Ascending aorta (tissue), 2 donors: ENCODE measurements at regions of chr1 and their contacts with region 1.

Region 1: GRCh38 chr1:33472349-33472980 is at the start of gene ZSCAN20:
- DNase-seq: peak; percentile 94 to 99
- H3K4me3 ChIP-seq: peak within 1 kb of the TSS; percentile 68 to 73
- H3K27ac ChIP-seq: peak within 1 kb of the TSS; percentile 89 to 90
- H3K4me1 ChIP-seq: peaks cover 3 to 27% of the 10 kb centered on the region in 2 donors
- H3K27me3 ChIP-seq: no peaks in the 10 kb centered on the region
- CTCF ChIP-seq: no peak
- total RNA-seq, gene ZSCAN20: 42.6 TPM

Region 2: GRCh38 chr1:33127001-33127791 is 345.3 kb before region 1 on chr1:
- intact Hi-C with region 1: loop called (anchors 1 kb)
- DNase-seq: peak; percentile 97 to 100
- H3K4me3 ChIP-seq: peak overlapping the region; percentile 63 to 79
- H3K27ac ChIP-seq: peak overlapping the region; percentile 86 to 88
- H3K4me1 ChIP-seq: peaks cover 7 to 15% of the 10 kb centered on the region in 2 donors
- H3K27me3 ChIP-seq: no peaks in the 10 kb centered on the region
- CTCF ChIP-seq: peak; percentile 85 to 89 (median 87)

Region 3: DNA sequence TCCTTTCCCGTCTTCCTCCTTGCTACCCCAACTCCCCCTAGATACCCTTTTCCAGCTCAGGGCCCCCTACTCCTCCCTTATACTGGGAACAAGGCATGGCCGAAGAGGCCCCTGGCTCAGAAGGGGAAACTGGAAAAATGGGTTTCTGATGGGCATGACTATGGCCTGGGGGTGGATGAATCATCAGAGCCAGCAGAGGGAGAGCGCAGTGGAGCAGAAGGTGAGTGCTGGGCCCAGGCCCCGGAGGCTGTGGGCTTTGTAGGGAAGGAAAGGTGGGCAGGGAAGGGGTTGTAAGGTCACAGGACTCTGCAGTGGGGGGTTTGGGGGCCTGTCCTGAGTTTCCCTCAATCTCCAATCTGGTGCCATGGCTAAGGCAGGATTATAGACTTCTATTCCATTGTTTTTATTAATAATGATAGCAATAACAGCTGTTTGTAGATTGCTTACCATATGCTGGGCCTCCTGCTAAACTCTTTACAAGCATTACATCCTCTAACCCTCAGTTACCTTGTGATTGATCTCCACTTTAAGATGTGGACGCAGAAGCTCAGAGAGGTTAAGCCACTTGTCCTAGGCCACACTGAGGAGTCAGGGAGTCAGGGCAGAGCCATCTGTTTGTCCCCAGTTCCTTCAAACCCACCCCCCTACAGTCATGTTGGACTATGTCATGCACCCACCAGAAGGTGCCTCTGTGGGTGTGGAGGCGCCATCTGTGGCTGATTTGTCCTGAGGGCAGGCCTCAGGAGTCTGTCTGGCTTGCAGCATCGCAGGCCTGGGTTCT is 252.4 kb before region 1 on chr1:
- intact Hi-C with region 1: loop called (anchors 2 kb)
- DNase-seq: no peak
- H3K4me3 ChIP-seq: no peak overlapping the region
- H3K27ac ChIP-seq: no peak overlapping the region
- H3K4me1 ChIP-seq: peaks cover 0 to 2% of the 10 kb centered on the region in 2 donors
- H3K27me3 ChIP-seq: no peaks in the 10 kb centered on the region
- CTCF ChIP-seq: no peak

Region 4: GRCh38 chr1:33295450-33296081 is 176.9 kb before region 1 on chr1:
- intact Hi-C with region 1: loop called (anchors 1 kb)
- DNase-seq: peak; percentile 43 to 93
- H3K4me3 ChIP-seq: no peak overlapping the region
- H3K27ac ChIP-seq: peak overlapping the region; percentile 44 to 54
- H3K4me1 ChIP-seq: peaks cover 4 to 13% of the 10 kb centered on the region in 2 donors
- H3K27me3 ChIP-seq: no peaks in the 10 kb centered on the region
- CTCF ChIP-seq: peak; percentile 93 to 98 (median 98)

Region 5: DNA sequence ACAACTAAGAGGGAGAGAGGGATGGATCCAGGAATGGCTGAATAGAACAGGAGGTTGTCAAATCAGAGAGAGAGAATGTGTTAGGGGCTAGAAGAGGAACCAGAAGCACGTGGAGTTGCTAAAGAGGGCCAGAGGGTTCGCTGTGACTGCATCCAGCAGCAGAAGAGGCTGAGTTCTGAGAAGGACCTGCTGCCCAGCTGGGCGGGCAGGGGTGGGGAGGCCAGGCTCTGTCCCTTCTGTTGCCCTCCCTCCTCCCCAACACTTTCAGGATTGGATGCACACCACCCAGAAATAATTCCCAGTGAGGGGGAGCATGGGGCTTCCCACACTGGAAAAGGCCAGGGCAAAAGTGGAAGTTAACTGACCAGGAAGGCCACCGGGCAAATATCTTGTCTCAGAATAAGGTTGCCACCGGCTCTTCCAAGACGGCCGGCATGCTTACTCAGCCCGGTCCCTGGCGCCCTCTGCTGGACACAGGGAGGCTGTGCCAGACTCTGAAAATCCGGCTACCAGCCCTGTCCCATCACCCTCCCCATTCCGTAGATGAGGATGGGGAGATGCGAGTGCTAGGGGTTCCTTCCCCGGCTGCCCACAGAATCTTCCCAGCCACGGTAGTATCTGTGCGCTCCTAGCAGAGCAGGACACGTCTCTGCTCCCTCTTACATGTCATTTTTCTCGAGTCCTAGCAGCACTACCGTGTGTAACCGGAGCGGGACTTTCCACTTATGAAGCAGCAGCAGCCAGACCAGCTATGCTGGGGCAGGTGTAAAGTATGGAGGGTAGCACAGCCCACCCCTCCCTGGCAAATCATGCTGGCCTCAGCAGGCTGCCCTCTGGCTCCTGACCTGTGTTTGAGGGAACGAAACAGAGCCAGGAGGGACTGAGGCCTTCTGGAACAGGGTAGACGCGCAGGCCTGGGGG is 104.7 kb before region 1 on chr1:
- intact Hi-C with region 1: loop called (anchors 5 kb)
- DNase-seq: peak in 1 of 2 donors; percentile 92
- H3K4me3 ChIP-seq: peak overlapping the region in 1 of 2 donors; percentile 36
- H3K27ac ChIP-seq: peak overlapping the region; percentile 73 to 87
- H3K4me1 ChIP-seq: peaks cover 12 to 46% of the 10 kb centered on the region in 2 donors
- H3K27me3 ChIP-seq: no peaks in the 10 kb centered on the region
- CTCF ChIP-seq: peak; percentile 94 to 98 (median 96)

Region 6: DNA sequence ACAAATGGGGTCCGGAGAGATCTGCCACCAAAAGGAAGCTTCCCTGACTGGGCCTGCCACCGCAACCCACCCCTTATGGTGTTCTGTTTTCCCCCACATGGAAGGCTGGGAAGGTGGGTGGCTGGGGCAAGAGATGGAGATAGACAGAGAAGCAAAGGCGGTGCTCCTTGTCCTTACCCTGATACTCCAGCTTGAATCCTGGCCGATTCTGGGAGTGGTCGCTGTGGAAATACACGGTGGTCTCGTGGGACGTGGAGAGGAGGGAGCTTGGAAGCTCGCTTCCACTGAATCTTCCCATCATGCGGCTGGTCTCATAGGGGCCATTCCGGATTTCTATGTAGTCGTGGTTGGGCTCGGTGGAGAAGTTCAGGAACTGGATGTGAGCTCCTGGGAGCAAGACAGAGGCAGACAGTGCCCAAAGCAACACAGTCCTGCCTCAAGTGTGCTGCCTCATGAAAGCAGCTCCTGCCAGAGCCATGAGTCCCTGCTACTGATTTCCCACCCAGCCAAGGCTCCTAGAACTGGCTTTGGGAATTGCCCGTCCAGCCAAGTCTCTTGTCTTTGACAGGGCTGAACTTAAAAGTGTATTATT is 138.5 kb after region 1 on chr1:
- intact Hi-C with region 1: loop called (anchors 5 kb)
- DNase-seq: no peak
- H3K4me3 ChIP-seq: no peak overlapping the region
- H3K27ac ChIP-seq: peak overlapping the region in 1 of 2 donors; percentile 31
- H3K4me1 ChIP-seq: no peaks in the 10 kb centered on the region
- H3K27me3 ChIP-seq: no peaks in the 10 kb centered on the region
- CTCF ChIP-seq: no peak